ENCODE measurements at regions of chr5 and their contacts with region 1.

Region 1: GRCh38 chr5:126776497-126777256 is at the start of gene LMNB1:
- DNase-seq: peak; percentile 92 to 98 (median 94)
- H3K4me3 ChIP-seq: peak within 1 kb of the TSS; percentile 78 to 94
- H3K4me3 Mint-ChIP-seq: peak within 1 kb of the TSS; percentile 88 to 98 (median 95)
- H3K27ac ChIP-seq: peak within 1 kb of the TSS; percentile 85
- H3K27ac Mint-ChIP-seq: peak within 1 kb of the TSS; percentile 86 to 99 (median 95)
- H3K4me1 ChIP-seq: peaks cover 37% of the 10 kb centered on the region
- H3K4me1 Mint-ChIP-seq: peaks cover 16 to 35% (median 25%) of the 10 kb centered on the region in 4 donors
- H3K27me3 ChIP-seq: no peaks in the 10 kb centered on the region
- H3K27me3 Mint-ChIP-seq: no peaks in the 10 kb centered on the region
- total RNA-seq, gene LMNB1: 28.2 to 32.3 TPM

Region 2: GRCh38 chr5:126449751-126450271 is 326.9 kb before region 1 on chr5:
- CTCF ChIA-PET with region 1: no interaction called
- POLR2A ChIA-PET with region 1: interaction called, 11 read pairs
- intact Hi-C with region 1: no loop called
- DNase-seq: peak; percentile 50 to 72 (median 63)
- H3K4me3 ChIP-seq: peak overlapping the region; percentile 32 to 44
- H3K4me3 Mint-ChIP-seq: peak overlapping the region; percentile 83 to 94 (median 90)
- H3K27ac ChIP-seq: peak overlapping the region; percentile 87
- H3K27ac Mint-ChIP-seq: peak overlapping the region; percentile 95 to 100 (median 98)
- H3K4me1 ChIP-seq: peaks cover 57% of the 10 kb centered on the region
- H3K4me1 Mint-ChIP-seq: peaks cover 45 to 64% (median 55%) of the 10 kb centered on the region in 4 donors
- H3K27me3 ChIP-seq: no peaks in the 10 kb centered on the region
- H3K27me3 Mint-ChIP-seq: no peaks in the 10 kb centered on the region

Region 3: DNA sequence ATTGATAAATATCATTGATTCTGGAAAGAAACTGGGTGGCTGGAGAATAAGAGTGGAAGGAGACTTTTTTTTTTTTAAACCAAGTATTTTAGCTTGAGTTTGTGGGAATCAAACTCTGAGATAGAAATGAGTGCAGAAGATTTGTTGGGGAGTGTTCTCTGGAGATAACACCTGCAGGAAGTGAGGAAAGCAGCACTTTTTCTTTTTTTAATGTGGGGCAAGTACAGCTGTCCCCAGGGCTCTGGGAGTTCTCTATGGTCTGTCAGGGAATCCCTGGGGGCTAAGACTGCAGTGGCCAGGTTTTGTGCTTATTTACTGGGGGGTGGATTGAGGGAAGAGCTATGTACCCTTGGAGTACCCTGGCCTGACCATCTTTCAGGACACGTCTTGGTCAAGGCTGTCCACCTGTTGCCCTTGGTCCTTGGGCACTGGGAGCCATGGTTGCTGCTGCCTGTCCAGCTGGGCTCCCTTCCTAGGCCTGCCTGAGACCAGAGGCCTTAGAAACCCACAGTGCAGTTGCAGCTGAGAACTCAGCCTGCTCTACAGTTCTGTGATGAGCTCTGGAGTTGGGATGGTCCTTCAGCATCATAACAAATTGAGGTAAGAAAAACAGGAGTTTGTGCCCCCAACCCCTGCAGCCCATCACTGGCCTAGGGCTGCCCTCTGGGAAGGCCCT is 90.1 kb before region 1 on chr5:
- CTCF ChIA-PET with region 1: interaction called, 319 read pairs
- POLR2A ChIA-PET with region 1: interaction called, 72 read pairs
- intact Hi-C with region 1: no loop called
- DNase-seq: no peak
- H3K4me3 ChIP-seq: no peak overlapping the region
- H3K4me3 Mint-ChIP-seq: no peak overlapping the region
- H3K27ac ChIP-seq: no peak overlapping the region
- H3K27ac Mint-ChIP-seq: no peak overlapping the region
- H3K4me1 ChIP-seq: no peaks in the 10 kb centered on the region
- H3K4me1 Mint-ChIP-seq: peaks cover 0 to 6% (median 3%) of the 10 kb centered on the region in 4 donors
- H3K27me3 ChIP-seq: no peaks in the 10 kb centered on the region
- H3K27me3 Mint-ChIP-seq: peaks cover 2 to 6% of the 10 kb centered on the region in 2 donors

Region 4: GRCh38 chr5:126794157-126794828 is 17.6 kb after region 1 on chr5:
- CTCF ChIA-PET with region 1: interaction called, 15 read pairs
- POLR2A ChIA-PET with region 1: interaction called, 8 read pairs
- intact Hi-C with region 1: no loop called
- DNase-seq: no peak
- H3K4me3 ChIP-seq: no peak overlapping the region
- H3K4me3 Mint-ChIP-seq: no peak overlapping the region
- H3K27ac ChIP-seq: no peak overlapping the region
- H3K27ac Mint-ChIP-seq: peak overlapping the region in 1 of 7 donors; percentile 14
- H3K4me1 ChIP-seq: peaks cover 31% of the 10 kb centered on the region
- H3K4me1 Mint-ChIP-seq: peaks cover 29 to 61% (median 46%) of the 10 kb centered on the region in 4 donors
- H3K27me3 ChIP-seq: no peaks in the 10 kb centered on the region
- H3K27me3 Mint-ChIP-seq: no peaks in the 10 kb centered on the region

Region 5: GRCh38 chr5:126852091-126852571 is 75.5 kb after region 1 on chr5:
- CTCF ChIA-PET with region 1: interaction called, 5 read pairs
- POLR2A ChIA-PET with region 1: interaction called, 39 read pairs
- intact Hi-C with region 1: loop called (anchors 2 kb)
- DNase-seq: peak in 4 of 5 donors; percentile 27 to 44 (median 34)
- H3K4me3 ChIP-seq: peak overlapping the region in 1 of 2 donors; percentile 29
- H3K4me3 Mint-ChIP-seq: peak overlapping the region; percentile 65 to 87 (median 78)
- H3K27ac ChIP-seq: peak overlapping the region; percentile 8
- H3K27ac Mint-ChIP-seq: peak overlapping the region; percentile 89 to 97 (median 95)
- H3K4me1 ChIP-seq: peaks cover 36% of the 10 kb centered on the region
- H3K4me1 Mint-ChIP-seq: peaks cover 33 to 50% (median 45%) of the 10 kb centered on the region in 4 donors
- H3K27me3 ChIP-seq: no peaks in the 10 kb centered on the region
- H3K27me3 Mint-ChIP-seq: no peaks in the 10 kb centered on the region

Region 6: GRCh38 chr5:127492854-127493738 is 716.4 kb after region 1 on chr5:
- CTCF ChIA-PET with region 1: interaction called, 4 read pairs
- POLR2A ChIA-PET with region 1: no interaction called
- intact Hi-C with region 1: loop called (anchors 2 kb)
- DNase-seq: peak in 4 of 5 donors; percentile 38 to 54 (median 50)
- H3K4me3 ChIP-seq: no peak overlapping the region
- H3K4me3 Mint-ChIP-seq: no peak overlapping the region
- H3K27ac ChIP-seq: no peak overlapping the region
- H3K27ac Mint-ChIP-seq: no peak overlapping the region
- H3K4me1 ChIP-seq: no peaks in the 10 kb centered on the region
- H3K4me1 Mint-ChIP-seq: peaks cover 0 to 2% (median 0%) of the 10 kb centered on the region in 4 donors
- H3K27me3 ChIP-seq: no peaks in the 10 kb centered on the region
- H3K27me3 Mint-ChIP-seq: peaks cover 9 to 17% of the 10 kb centered on the region in 2 donors

Measured in CD4-positive, alpha-beta memory T cell (primary cell).